CD14-positive monocyte (primary cell): ENCODE measurements at regions of chr5 and their contacts with region 1.

Region 1: DNA sequence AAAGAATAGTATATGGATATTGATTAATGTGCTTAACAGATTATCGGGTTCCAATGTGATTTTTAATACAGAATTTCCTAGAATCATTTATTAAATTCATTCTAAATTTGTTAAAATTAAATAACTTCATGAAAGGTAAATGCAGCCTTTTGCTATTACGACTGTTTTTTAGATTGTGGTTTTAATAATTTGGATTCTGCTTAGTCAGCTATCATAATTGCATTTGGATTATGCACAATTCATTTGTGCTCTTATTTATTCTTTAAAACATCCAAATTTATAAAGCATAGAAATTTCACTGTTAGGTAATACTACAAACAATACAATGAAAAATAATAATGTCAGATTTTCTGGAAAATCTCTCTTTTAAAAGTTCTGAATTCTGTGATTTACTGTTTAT is 1598.5 kb downstream of the EFNA5 start:
- DNase-seq: no peak
- H3K4me3 ChIP-seq: no peak overlapping the region
- H3K4me3 Mint-ChIP-seq: no peak overlapping the region
- H3K27ac ChIP-seq: no peak overlapping the region
- H3K27ac Mint-ChIP-seq: no peak overlapping the region
- H3K4me1 ChIP-seq: no peaks in the 10 kb centered on the region
- H3K4me1 Mint-ChIP-seq: no peaks in the 10 kb centered on the region
- H3K27me3 ChIP-seq: no peaks in the 10 kb centered on the region
- H3K27me3 Mint-ChIP-seq: no peaks in the 10 kb centered on the region
- CTCF ChIP-seq: no peak

Region 2: DNA sequence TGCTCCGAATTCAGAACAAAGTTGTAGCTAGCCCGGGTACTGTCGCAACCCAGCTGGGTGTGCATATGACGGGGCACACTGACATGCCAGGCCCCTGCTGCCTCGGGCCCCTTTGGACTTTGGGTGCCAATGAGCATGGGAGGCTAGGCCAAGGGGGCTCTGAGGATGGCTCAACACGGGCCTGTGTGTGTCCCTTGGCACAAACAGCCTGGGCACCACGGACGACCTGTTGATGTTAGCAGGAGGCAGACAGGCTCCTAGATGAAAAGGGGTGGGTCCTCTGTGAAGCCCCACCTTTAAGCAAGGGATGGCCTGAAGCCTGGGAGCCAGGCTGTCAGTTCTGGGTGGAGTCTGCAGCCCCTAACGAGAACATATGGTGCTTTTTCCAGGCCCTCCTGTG is 89.7 kb before region 1 on chr5:
- intact Hi-C with region 1: loop called in 1 of 2 experiments (anchors 5 kb)
- DNase-seq: no peak
- H3K4me3 ChIP-seq: no peak overlapping the region
- H3K4me3 Mint-ChIP-seq: no peak overlapping the region
- H3K27ac ChIP-seq: no peak overlapping the region
- H3K27ac Mint-ChIP-seq: no peak overlapping the region
- H3K4me1 ChIP-seq: no peaks in the 10 kb centered on the region
- H3K4me1 Mint-ChIP-seq: no peaks in the 10 kb centered on the region
- H3K27me3 ChIP-seq: no peaks in the 10 kb centered on the region
- H3K27me3 Mint-ChIP-seq: peaks cover 0 to 4% (median 0%) of the 10 kb centered on the region in 3 donors
- CTCF ChIP-seq: no peak

Region 3: GRCh38 chr5:106019261-106019660 is 52.9 kb before region 1 on chr5:
- intact Hi-C with region 1: no loop called
- DNase-seq: no peak
- H3K4me3 ChIP-seq: no peak overlapping the region
- H3K4me3 Mint-ChIP-seq: no peak overlapping the region
- H3K27ac ChIP-seq: no peak overlapping the region
- H3K27ac Mint-ChIP-seq: no peak overlapping the region
- H3K4me1 ChIP-seq: no peaks in the 10 kb centered on the region
- H3K4me1 Mint-ChIP-seq: no peaks in the 10 kb centered on the region
- H3K27me3 ChIP-seq: no peaks in the 10 kb centered on the region
- H3K27me3 Mint-ChIP-seq: no peaks in the 10 kb centered on the region
- CTCF ChIP-seq: no peak